ENCODE measurements at regions of chr4 and their contacts with region 1.

Region 1: GRCh38 chr4:138680989-138681604 is 334.5 kb upstream of the NOCT start:
- DNase-seq: peak; percentile 20 to 70 (median 42)
- ATAC-seq: peak; percentile 67
- H3K4me3 ChIP-seq: no peak overlapping the region
- H3K4me3 Mint-ChIP-seq: no peak overlapping the region
- H3K27ac ChIP-seq: no peak overlapping the region
- H3K27ac Mint-ChIP-seq: no peak overlapping the region
- H3K4me1 ChIP-seq: no peaks in the 10 kb centered on the region
- H3K4me1 Mint-ChIP-seq: no peaks in the 10 kb centered on the region
- H3K27me3 ChIP-seq: no peaks in the 10 kb centered on the region
- H3K27me3 Mint-ChIP-seq: peaks cover 15 to 33% (median 24%) of the 10 kb centered on the region in 5 donors

Region 2: DNA sequence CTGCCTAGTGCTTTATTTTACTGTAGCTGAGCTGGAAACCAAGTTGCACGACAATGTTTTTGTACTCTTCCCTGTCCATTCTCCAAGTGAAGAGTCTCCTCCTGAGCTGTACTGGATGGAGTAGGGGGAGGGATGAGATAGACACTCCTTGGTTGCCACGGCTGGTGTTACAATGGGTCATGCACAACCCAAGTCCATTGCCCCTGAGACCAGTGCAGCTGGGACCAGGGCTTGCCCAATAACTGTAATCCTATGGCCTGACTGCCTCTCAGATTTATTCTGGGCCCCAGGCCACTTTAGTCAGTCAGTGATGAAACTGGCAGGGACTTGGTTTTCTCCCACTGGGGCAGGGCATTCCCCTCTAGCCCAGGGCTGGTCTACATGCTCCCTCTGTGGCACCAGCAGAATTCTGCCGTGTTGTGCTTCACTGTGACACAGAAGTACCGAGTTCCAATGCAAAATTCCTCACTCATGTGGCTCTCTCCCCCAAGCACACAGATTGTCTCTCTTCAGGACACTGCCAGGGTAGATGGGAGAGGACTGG is 945.5 kb before region 1 on chr4:
- CTCF ChIA-PET with region 1: no interaction called
- POLR2A ChIA-PET with region 1: no interaction called
- intact Hi-C with region 1: loop called in 1 of 2 experiments (anchors 10 kb)
- DNase-seq: no peak
- ATAC-seq: peak; percentile 26
- H3K4me3 ChIP-seq: no peak overlapping the region
- H3K4me3 Mint-ChIP-seq: no peak overlapping the region
- H3K27ac ChIP-seq: no peak overlapping the region
- H3K27ac Mint-ChIP-seq: no peak overlapping the region
- H3K4me1 ChIP-seq: no peaks in the 10 kb centered on the region
- H3K4me1 Mint-ChIP-seq: no peaks in the 10 kb centered on the region
- H3K27me3 ChIP-seq: no peaks in the 10 kb centered on the region
- H3K27me3 Mint-ChIP-seq: no peaks in the 10 kb centered on the region

Region 3: GRCh38 chr4:138035781-138036258 is 645.3 kb before region 1 on chr4:
- CTCF ChIA-PET with region 1: no interaction called
- POLR2A ChIA-PET with region 1: no interaction called
- intact Hi-C with region 1: loop called in 1 of 2 experiments (anchors 1 kb)
- DNase-seq: no peak
- ATAC-seq: peak; percentile 60
- H3K4me3 ChIP-seq: no peak overlapping the region
- H3K4me3 Mint-ChIP-seq: no peak overlapping the region
- H3K27ac ChIP-seq: no peak overlapping the region
- H3K27ac Mint-ChIP-seq: no peak overlapping the region
- H3K4me1 ChIP-seq: no peaks in the 10 kb centered on the region
- H3K4me1 Mint-ChIP-seq: no peaks in the 10 kb centered on the region
- H3K27me3 ChIP-seq: no peaks in the 10 kb centered on the region
- H3K27me3 Mint-ChIP-seq: no peaks in the 10 kb centered on the region

Region 4: DNA sequence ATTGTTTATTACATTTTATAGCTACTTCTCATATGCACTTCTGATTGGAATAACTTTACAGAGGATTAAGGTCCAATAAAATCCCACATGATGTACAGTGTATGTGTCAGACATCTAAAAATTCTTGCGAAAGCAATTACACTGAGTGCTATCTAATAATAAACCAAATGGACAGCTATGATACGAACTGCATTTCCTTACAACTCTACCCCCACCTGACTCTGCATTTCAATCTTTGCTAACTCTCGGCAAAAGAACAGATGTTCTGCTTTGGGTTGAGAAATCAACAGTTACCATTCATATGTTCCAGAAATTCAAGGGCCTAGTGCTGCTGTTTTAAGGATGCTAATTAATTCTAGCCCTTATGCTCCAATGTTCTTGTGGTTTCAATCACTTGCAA is 46.6 kb after region 1 on chr4:
- CTCF ChIA-PET with region 1: no interaction called
- POLR2A ChIA-PET with region 1: no interaction called
- intact Hi-C with region 1: no loop called
- DNase-seq: no peak
- ATAC-seq: no peak
- H3K4me3 ChIP-seq: no peak overlapping the region
- H3K4me3 Mint-ChIP-seq: no peak overlapping the region
- H3K27ac ChIP-seq: no peak overlapping the region
- H3K27ac Mint-ChIP-seq: no peak overlapping the region
- H3K4me1 ChIP-seq: no peaks in the 10 kb centered on the region
- H3K4me1 Mint-ChIP-seq: no peaks in the 10 kb centered on the region
- H3K27me3 ChIP-seq: no peaks in the 10 kb centered on the region
- H3K27me3 Mint-ChIP-seq: peaks cover 0 to 10% (median 4%) of the 10 kb centered on the region in 5 donors

Region 5: GRCh38 chr4:138775890-138776289 is 94.8 kb after region 1 on chr4:
- CTCF ChIA-PET with region 1: no interaction called
- POLR2A ChIA-PET with region 1: no interaction called
- intact Hi-C with region 1: no loop called
- DNase-seq: no peak
- ATAC-seq: peak; percentile 36
- H3K4me3 ChIP-seq: no peak overlapping the region
- H3K4me3 Mint-ChIP-seq: no peak overlapping the region
- H3K27ac ChIP-seq: no peak overlapping the region
- H3K27ac Mint-ChIP-seq: no peak overlapping the region
- H3K4me1 ChIP-seq: no peaks in the 10 kb centered on the region
- H3K4me1 Mint-ChIP-seq: no peaks in the 10 kb centered on the region
- H3K27me3 ChIP-seq: no peaks in the 10 kb centered on the region
- H3K27me3 Mint-ChIP-seq: peaks cover 0 to 6% (median 0%) of the 10 kb centered on the region in 5 donors

Region 6: GRCh38 chr4:138870737-138871554 is 189.8 kb after region 1 on chr4:
- CTCF ChIA-PET with region 1: no interaction called
- POLR2A ChIA-PET with region 1: no interaction called
- intact Hi-C with region 1: loop called in 1 of 2 experiments (anchors 2 kb)
- DNase-seq: peak in 8 of 9 donors; percentile 8 to 36 (median 24)
- ATAC-seq: peak; percentile 64
- H3K4me3 ChIP-seq: no peak overlapping the region
- H3K4me3 Mint-ChIP-seq: no peak overlapping the region
- H3K27ac ChIP-seq: no peak overlapping the region
- H3K27ac Mint-ChIP-seq: no peak overlapping the region
- H3K4me1 ChIP-seq: no peaks in the 10 kb centered on the region
- H3K4me1 Mint-ChIP-seq: no peaks in the 10 kb centered on the region
- H3K27me3 ChIP-seq: no peaks in the 10 kb centered on the region
- H3K27me3 Mint-ChIP-seq: peaks cover 13 to 27% (median 23%) of the 10 kb centered on the region in 5 donors

Region 7: GRCh38 chr4:138919094-138919936 is 238.2 kb after region 1 on chr4:
- CTCF ChIA-PET with region 1: no interaction called
- POLR2A ChIA-PET with region 1: no interaction called
- intact Hi-C with region 1: loop called in 1 of 2 experiments (anchors 5 kb)
- DNase-seq: peak in 4 of 9 donors; percentile 6 to 40 (median 22)
- ATAC-seq: peak; percentile 75
- H3K4me3 ChIP-seq: no peak overlapping the region
- H3K4me3 Mint-ChIP-seq: peak overlapping the region in 2 of 10 donors; percentile 2 to 13
- H3K27ac ChIP-seq: no peak overlapping the region
- H3K27ac Mint-ChIP-seq: no peak overlapping the region
- H3K4me1 ChIP-seq: no peaks in the 10 kb centered on the region
- H3K4me1 Mint-ChIP-seq: peaks cover 0 to 7% (median 0%) of the 10 kb centered on the region in 7 donors
- H3K27me3 ChIP-seq: no peaks in the 10 kb centered on the region
- H3K27me3 Mint-ChIP-seq: peaks cover 4 to 21% (median 9%) of the 10 kb centered on the region in 5 donors

Measured in naive thymus-derived CD4-positive, alpha-beta T cell (primary cell).